B cell (primary cell): ENCODE measurements at regions of chr21 and their contacts with region 1.

Region 1: DNA sequence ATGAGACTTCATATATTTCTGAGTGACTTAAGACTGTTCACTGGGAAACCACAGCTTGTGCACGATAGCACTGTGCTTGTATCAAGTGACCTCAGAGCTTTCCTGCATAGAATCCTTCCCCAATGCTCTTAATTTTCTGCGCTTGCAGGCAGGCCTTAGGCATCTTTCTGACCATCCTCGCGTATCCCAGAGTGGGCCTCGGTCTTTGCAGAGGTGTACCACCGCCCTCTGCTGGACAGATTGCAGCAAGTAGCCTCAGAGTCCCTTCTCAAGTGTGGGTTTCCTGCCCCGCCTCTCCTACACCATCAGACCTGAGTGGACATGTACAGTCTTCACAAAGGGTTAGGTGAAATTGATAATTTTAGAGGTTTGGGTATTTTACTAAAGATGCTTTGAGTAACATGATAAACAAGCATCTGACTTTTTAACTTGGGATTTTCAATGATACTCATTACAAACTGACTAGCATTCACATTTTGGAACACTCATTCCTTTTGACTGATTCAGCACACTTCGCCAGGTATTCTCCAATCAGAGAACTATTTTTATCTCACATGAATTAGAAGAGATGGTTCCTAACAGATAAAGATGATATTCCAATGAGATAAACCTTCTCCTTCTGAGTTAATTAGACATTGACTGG is 246.5 kb upstream of the USP25 start:
- DNase-seq: peak; percentile 83
- ATAC-seq: peak; percentile 99
- H3K4me3 ChIP-seq: no peak overlapping the region
- H3K4me3 Mint-ChIP-seq: no peak overlapping the region
- H3K27ac ChIP-seq: no peak overlapping the region
- H3K27ac Mint-ChIP-seq: no peak overlapping the region
- H3K4me1 ChIP-seq: peaks cover 0 to 3% of the 10 kb centered on the region in 2 donors
- H3K4me1 Mint-ChIP-seq: peaks cover 2% of the 10 kb centered on the region
- H3K27me3 ChIP-seq: no peaks in the 10 kb centered on the region
- H3K27me3 Mint-ChIP-seq: peaks cover 4% of the 10 kb centered on the region
- CTCF ChIP-seq: peak; percentile 93

Region 2: GRCh38 chr21:14259747-14260146 is 1223.5 kb before region 1 on chr21:
- CTCF ChIA-PET with region 1: interaction called, 15 read pairs
- POLR2A ChIA-PET with region 1: no interaction called
- intact Hi-C with region 1: loop called (anchors 1 kb)
- DNase-seq: peak; percentile 53
- ATAC-seq: peak; percentile 36
- H3K4me3 ChIP-seq: no peak overlapping the region
- H3K4me3 Mint-ChIP-seq: no peak overlapping the region
- H3K27ac ChIP-seq: no peak overlapping the region
- H3K27ac Mint-ChIP-seq: no peak overlapping the region
- H3K4me1 ChIP-seq: no peaks in the 10 kb centered on the region
- H3K4me1 Mint-ChIP-seq: no peaks in the 10 kb centered on the region
- H3K27me3 ChIP-seq: no peaks in the 10 kb centered on the region
- H3K27me3 Mint-ChIP-seq: no peaks in the 10 kb centered on the region
- CTCF ChIP-seq: peak; percentile 81

Region 3: DNA sequence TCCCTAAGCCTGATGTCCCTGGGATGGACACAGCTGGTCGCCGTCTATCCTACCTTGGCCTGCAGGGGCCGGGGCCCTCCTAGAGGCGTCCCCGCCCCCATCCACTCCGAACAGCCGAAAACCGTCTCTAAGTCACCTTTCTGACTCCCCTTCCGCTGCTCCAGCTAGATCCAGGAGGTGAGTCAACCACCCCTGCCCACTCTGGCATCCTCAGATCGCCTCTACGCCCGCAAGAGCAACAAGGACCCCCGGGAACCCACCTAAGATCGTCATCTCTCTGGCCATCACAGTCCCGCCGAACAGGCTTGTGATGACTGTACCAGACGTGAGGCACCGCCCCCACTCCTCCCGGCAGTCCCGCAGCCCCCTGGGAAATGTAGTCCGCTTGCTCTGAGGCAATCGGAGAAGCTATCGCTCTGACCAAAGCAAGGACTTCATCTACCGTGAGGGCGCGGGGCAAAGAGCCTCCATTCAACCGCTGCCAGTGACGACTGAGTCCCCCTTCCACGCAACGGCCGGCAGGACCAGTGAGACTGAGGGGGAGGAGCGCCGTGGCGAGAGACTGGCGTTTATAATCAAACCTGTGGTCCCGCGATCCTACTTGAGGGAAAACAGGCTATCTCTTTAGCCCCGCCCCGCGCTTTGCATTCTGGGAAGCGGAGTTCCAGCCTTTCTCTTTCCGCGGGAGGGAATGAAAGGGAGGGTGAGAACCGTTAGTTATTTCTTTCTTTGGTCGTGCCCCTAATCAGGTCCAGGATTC is 1100.2 kb before region 1 on chr21 and contains the start of gene HSPA13:
- CTCF ChIA-PET with region 1: interaction called, 3 read pairs
- POLR2A ChIA-PET with region 1: no interaction called
- intact Hi-C with region 1: loop called (anchors 5 kb)
- DNase-seq: peak; percentile 100
- ATAC-seq: peak; percentile 93
- H3K4me3 ChIP-seq: peak within 1 kb of the TSS; percentile 85 to 95 (median 88)
- H3K4me3 Mint-ChIP-seq: peak within 1 kb of the TSS; percentile 100
- H3K27ac ChIP-seq: peak within 1 kb of the TSS; percentile 91 to 96
- H3K27ac Mint-ChIP-seq: peak within 1 kb of the TSS; percentile 98
- H3K4me1 ChIP-seq: peaks cover 10 to 11% of the 10 kb centered on the region in 2 donors
- H3K4me1 Mint-ChIP-seq: peaks cover 37% of the 10 kb centered on the region
- H3K27me3 ChIP-seq: no peaks in the 10 kb centered on the region
- H3K27me3 Mint-ChIP-seq: no peaks in the 10 kb centered on the region
- CTCF ChIP-seq: no peak
- total RNA-seq, gene HSPA13: 19.1 and 19.3 TPM in 2 replicates

Region 4: DNA sequence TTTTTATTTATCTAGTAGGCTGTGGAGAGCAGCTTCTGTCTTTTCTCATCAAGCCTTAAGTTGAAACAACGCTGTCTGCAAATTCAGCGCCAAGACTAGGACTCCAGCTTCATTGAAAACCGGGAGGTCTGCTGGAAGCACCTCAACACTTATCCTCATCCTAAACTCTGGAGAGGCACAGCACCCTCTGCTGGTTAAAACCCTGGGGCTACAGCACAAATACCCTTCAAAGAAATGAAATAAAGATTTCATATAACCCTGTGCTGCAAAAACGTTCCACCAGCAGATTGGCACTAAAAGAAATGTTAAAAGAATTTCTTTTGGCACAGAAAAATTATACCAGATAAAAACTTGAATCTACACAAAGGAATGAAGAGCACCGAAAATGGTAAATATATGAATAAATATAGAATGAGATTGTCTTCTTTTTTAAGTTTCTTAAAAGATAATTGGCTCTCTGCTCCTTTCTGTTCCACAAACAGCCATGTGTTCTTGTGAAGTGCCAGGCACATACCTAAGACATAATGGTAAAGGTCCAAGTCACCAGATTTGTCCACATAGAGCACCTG is 709.4 kb before region 1 on chr21:
- CTCF ChIA-PET with region 1: interaction called, 8 read pairs
- POLR2A ChIA-PET with region 1: no interaction called
- intact Hi-C with region 1: loop called (anchors 10 kb)
- DNase-seq: peak; percentile 66
- ATAC-seq: peak; percentile 64
- H3K4me3 ChIP-seq: no peak overlapping the region
- H3K4me3 Mint-ChIP-seq: no peak overlapping the region
- H3K27ac ChIP-seq: no peak overlapping the region
- H3K27ac Mint-ChIP-seq: no peak overlapping the region
- H3K4me1 ChIP-seq: peaks cover 0 to 3% of the 10 kb centered on the region in 2 donors
- H3K4me1 Mint-ChIP-seq: peaks cover 17% of the 10 kb centered on the region
- H3K27me3 ChIP-seq: no peaks in the 10 kb centered on the region
- H3K27me3 Mint-ChIP-seq: no peaks in the 10 kb centered on the region
- CTCF ChIP-seq: peak; percentile 78

Region 5: DNA sequence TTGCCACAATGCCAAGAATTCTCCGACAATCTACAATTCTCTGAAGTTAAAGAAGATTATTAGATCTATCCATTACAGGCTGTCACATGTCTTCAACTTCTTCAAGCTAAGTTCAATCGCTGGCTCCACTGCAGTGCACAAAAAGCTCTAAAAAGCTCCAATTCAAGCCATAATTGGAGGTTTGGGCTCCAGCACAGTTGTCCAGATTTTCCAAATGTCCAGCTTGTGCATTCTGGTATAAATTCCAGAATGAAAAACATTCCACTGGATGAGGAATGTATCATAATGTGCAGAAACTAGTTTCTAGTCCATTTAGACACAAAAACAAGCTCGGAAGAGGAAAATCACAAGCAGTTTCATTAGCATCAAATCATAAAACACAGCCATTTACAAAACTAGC is 557.1 kb before region 1 on chr21:
- CTCF ChIA-PET with region 1: no interaction called
- POLR2A ChIA-PET with region 1: no interaction called
- intact Hi-C with region 1: no loop called
- DNase-seq: no peak
- ATAC-seq: no peak
- H3K4me3 ChIP-seq: no peak overlapping the region
- H3K4me3 Mint-ChIP-seq: no peak overlapping the region
- H3K27ac ChIP-seq: no peak overlapping the region
- H3K27ac Mint-ChIP-seq: no peak overlapping the region
- H3K4me1 ChIP-seq: no peaks in the 10 kb centered on the region
- H3K4me1 Mint-ChIP-seq: no peaks in the 10 kb centered on the region
- H3K27me3 ChIP-seq: no peaks in the 10 kb centered on the region
- H3K27me3 Mint-ChIP-seq: no peaks in the 10 kb centered on the region
- CTCF ChIP-seq: no peak

Region 6: GRCh38 chr21:15343066-15343465 is 140.2 kb before region 1 on chr21:
- CTCF ChIA-PET with region 1: no interaction called
- POLR2A ChIA-PET with region 1: no interaction called
- intact Hi-C with region 1: no loop called
- DNase-seq: no peak
- ATAC-seq: no peak
- H3K4me3 ChIP-seq: no peak overlapping the region
- H3K4me3 Mint-ChIP-seq: no peak overlapping the region
- H3K27ac ChIP-seq: no peak overlapping the region
- H3K27ac Mint-ChIP-seq: no peak overlapping the region
- H3K4me1 ChIP-seq: no peaks in the 10 kb centered on the region
- H3K4me1 Mint-ChIP-seq: peaks cover 2% of the 10 kb centered on the region
- H3K27me3 ChIP-seq: no peaks in the 10 kb centered on the region
- H3K27me3 Mint-ChIP-seq: peaks cover 17% of the 10 kb centered on the region
- CTCF ChIP-seq: no peak

Region 7: DNA sequence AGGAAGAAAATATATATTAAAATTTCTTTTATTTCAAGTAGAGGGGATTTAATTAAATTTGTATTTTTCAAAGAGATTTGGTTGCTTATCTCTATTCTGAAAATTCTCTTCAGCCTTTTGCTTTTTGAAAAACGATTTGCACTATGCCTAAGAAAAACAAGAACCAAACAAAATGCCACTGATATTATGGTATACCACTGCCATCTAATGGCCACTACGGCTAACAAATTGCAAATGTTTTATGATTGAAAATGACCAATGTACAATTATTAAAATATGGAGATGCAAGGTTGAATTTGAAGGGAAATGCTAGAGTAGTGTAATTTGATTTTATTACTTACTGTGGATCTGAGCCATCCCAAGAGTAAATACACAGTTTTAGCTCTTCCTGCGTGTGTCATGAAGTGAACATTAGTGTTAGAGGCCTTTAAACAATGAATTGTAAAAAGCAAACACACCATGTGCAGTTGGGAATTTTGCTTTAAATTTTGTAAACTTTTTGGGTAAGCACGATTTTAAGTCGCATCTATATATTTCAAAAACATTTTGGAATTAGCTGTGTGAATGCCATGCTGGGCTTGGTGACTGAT is 109.1 kb after region 1 on chr21:
- CTCF ChIA-PET with region 1: interaction called, 5 read pairs
- POLR2A ChIA-PET with region 1: no interaction called
- intact Hi-C with region 1: loop called (anchors 1 kb)
- DNase-seq: peak; percentile 62
- ATAC-seq: peak; percentile 33
- H3K4me3 ChIP-seq: no peak overlapping the region
- H3K4me3 Mint-ChIP-seq: no peak overlapping the region
- H3K27ac ChIP-seq: no peak overlapping the region
- H3K27ac Mint-ChIP-seq: no peak overlapping the region
- H3K4me1 ChIP-seq: no peaks in the 10 kb centered on the region
- H3K4me1 Mint-ChIP-seq: no peaks in the 10 kb centered on the region
- H3K27me3 ChIP-seq: no peaks in the 10 kb centered on the region
- H3K27me3 Mint-ChIP-seq: peaks cover 9% of the 10 kb centered on the region
- CTCF ChIP-seq: peak; percentile 85